OCI-LY7 (cell line): ENCODE measurements at regions of chr6 and their contacts with region 1.

Region 1: DNA sequence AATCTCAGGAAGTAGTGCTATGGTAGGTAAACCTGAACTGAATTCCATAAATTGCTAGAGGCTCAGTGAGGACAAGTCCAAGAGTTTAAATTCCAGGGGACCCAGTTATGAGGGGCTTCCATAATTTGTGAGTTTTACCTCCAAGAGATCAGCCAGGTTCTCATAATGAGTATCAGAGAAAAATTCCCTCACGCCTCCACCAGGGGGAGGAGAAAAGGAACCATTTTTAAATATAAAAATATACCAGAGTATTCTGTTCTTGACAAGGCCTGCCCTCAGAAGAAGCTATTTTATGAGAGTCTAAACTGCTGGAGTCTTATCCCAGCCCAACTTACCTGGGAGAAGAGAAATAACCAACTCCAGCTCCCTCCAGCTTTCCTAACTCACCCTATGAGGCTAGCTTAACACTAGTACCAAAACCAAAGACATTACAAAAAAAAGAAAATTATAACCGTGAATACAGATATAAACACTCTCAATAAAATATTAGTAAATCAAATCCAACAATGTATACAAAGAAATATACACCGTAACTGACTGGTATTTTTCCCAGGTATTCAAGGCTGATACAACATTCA is 158.7 kb downstream of the TFAP2A start:
- DNase-seq: peak; percentile 37
- H3K4me3 ChIP-seq: no peak overlapping the region
- H3K27ac ChIP-seq: no peak overlapping the region
- H3K4me1 ChIP-seq: no peaks in the 10 kb centered on the region
- CTCF ChIP-seq: peak; percentile 77

Region 2: GRCh38 chr6:11672256-11672655 is 1416.1 kb after region 1 on chr6:
- CTCF ChIA-PET with region 1: no interaction called
- POLR2A ChIA-PET with region 1: no interaction called
- intact Hi-C with region 1: loop called (anchors 5 kb)
- DNase-seq: no peak
- H3K4me3 ChIP-seq: no peak overlapping the region
- H3K27ac ChIP-seq: no peak overlapping the region
- H3K4me1 ChIP-seq: no peaks in the 10 kb centered on the region
- CTCF ChIP-seq: no peak